Lower leg skin (tissue), 4 donors: ENCODE measurements at regions of chr9 and their contacts with region 1.

Region 1: GRCh38 chr9:13427587-13427986 is 148.1 kb upstream of the MPDZ start:
- DNase-seq: no peak
- H3K4me3 ChIP-seq: no peak overlapping the region
- CTCF ChIP-seq: peak in 1 of 3 donors; percentile 16
- POLR2A ChIP-seq: no peak

Region 2: DNA sequence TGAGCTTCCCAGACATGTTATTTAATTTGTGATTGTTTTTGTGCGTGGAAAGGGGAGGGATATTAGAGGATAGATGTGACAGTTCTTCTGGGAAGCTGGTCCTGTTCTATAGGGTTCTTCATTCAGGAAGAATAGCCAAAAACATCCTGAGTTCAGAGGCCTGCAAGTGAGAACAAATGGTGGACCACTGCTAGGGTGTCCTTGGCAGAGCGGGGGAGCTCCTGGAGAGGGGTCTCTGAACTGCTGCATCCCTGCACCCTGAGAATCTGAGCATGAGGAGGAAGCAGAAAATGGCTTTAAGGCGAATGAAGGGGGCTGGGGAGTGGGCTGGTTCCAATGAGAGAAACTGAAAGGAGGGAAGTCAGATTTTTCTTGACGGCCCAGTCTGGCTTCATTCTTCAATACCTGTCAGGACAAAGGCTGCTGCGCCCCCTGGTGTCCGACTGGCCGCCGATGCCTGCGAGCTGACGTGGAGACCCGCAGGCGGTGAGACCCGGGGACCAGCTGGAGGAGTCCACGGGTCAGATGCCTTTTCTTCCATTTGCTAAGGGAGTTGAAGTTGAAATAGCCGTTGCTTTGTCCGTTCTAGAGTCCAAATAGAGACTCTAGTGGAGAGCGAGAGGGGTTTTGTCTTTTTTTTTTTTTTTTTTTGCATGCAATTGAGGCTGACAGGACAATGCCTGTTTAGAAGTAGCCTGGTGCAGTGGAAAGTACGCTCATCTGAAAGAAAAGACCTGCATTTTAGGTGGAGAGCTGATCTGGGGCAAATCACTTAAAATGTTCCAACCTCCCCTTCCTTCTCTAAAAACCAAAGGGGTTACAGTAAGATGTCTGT is 925.9 kb after region 1 on chr9:
- intact Hi-C with region 1: loop called (anchors 5 kb)
- DNase-seq: peak; percentile 93 to 99
- H3K4me3 ChIP-seq: no peak overlapping the region
- CTCF ChIP-seq: peak in 1 of 3 donors; percentile 66
- POLR2A ChIP-seq: no peak